ENCODE measurements at regions of chr12 and their contacts with region 1.

Region 1: DNA sequence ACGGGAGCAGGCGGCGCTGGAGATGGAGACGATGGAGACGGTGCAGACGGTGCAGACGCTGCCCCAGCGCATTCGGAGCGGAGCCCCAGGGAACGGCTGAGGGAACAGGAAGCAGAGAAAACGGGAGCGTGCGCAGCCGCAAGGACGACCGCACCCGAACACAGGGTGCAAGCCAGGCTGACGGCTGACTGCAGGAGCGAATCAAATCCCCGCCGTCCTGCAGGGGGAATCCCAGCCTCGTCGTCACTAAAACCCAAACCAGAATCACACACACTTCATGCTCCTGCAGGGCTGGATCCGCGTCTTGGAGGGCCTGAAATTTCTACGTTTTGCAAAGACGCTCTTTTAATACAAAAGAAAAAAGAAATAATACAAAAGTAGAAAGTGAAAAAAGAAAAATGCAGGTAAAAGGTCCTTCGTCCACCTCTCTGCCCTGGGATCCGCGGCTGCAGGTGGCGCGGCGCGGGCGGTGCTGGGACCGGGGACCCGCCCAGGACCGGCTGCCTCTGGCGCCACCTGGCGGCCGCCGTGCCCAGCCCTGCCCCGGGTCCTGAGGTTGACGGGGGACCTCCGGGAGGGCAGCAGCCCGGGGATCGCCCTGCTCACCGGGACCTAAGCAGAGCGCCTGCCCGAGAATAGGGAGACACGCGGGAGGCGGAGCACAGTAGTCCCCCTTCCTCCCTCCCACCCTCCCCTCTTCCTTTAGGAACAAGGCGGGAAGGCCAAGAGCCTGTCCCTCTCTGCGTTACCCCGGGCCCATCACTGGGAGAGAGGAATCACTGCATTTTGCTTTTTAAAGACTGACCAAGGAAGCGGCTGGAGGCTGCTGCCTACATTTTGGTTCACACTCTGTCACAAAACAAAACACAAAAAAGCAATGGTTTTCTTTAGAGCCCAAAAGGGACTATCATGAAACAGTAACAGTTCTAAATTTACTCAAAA is 20.1 kb downstream of the STX2 start:
- DNase-seq: peak; percentile 70 to 82 (median 73)
- H3K4me3 ChIP-seq: peak overlapping the region; percentile 60 to 69
- H3K4me3 Mint-ChIP-seq: peak overlapping the region; percentile 83 to 95 (median 92)
- H3K27ac ChIP-seq: peak overlapping the region; percentile 49
- H3K27ac Mint-ChIP-seq: peak overlapping the region in 6 of 7 donors; percentile 42 to 96 (median 85)
- H3K4me1 ChIP-seq: peaks cover 5% of the 10 kb centered on the region
- H3K4me1 Mint-ChIP-seq: peaks cover 7 to 15% (median 7%) of the 10 kb centered on the region in 4 donors
- H3K27me3 ChIP-seq: no peaks in the 10 kb centered on the region
- H3K27me3 Mint-ChIP-seq: no peaks in the 10 kb centered on the region

Region 2: DNA sequence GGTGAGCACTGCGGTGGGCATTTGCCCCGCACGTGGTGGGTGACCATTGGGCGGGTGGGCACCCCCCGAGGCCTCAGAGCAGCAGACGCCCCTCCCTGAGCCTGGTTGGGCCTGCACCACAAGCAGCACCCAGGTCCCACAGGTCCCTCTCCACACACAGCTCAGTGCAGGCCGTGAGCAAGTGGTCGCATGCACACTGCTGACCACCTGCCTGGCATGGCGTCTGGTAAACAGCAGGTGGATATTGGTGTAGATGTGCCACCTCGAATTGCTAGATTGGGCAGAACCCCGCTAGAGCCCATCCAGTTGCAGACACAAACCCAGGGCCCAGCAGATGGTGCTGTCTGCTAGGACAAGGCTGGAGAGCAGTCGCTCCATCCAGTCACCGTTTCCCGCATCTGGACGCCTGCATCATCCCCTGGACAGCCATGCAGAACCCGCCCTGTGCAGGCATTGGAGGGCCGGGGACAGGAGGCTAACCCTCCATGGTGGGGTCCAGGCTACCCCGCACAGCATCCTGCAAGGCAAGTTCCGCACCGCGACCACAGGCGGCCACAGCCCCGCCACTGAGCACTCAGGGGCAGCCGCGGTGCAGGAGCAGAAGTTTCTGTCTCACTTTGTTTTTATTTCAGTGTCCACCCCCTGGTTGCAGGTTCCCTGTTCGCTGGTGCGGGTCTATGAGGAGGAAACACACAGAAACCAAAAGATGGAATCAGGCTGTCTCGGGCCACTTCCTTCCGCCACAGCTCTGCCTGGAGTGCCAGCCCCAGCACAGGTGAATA is 57.2 kb before region 1 on chr12:
- CTCF ChIA-PET with region 1: interaction called, 5 read pairs
- POLR2A ChIA-PET with region 1: interaction called, 3 read pairs
- intact Hi-C with region 1: loop called (anchors 1 kb)
- DNase-seq: peak in 4 of 5 donors; percentile 47 to 54 (median 49)
- H3K4me3 ChIP-seq: peak overlapping the region; percentile 10 to 47
- H3K4me3 Mint-ChIP-seq: peak overlapping the region; percentile 59 to 75 (median 64)
- H3K27ac ChIP-seq: no peak overlapping the region
- H3K27ac Mint-ChIP-seq: peak overlapping the region in 2 of 7 donors; percentile 66 to 76
- H3K4me1 ChIP-seq: peaks cover 11% of the 10 kb centered on the region
- H3K4me1 Mint-ChIP-seq: peaks cover 0 to 16% (median 4%) of the 10 kb centered on the region in 4 donors
- H3K27me3 ChIP-seq: no peaks in the 10 kb centered on the region
- H3K27me3 Mint-ChIP-seq: peaks cover 0 to 2% of the 10 kb centered on the region in 2 donors

Region 3: GRCh38 chr12:130796985-130797686 is 21.8 kb before region 1 on chr12:
- CTCF ChIA-PET with region 1: interaction called, 8 read pairs
- POLR2A ChIA-PET with region 1: no interaction called
- intact Hi-C with region 1: loop called (anchors 1 kb)
- DNase-seq: peak; percentile 47 to 77 (median 58)
- H3K4me3 ChIP-seq: peak overlapping the region in 1 of 2 donors; percentile 53
- H3K4me3 Mint-ChIP-seq: peak overlapping the region; percentile 77 to 93 (median 85)
- H3K27ac ChIP-seq: peak overlapping the region; percentile 52
- H3K27ac Mint-ChIP-seq: peak overlapping the region; percentile 93 to 97 (median 95)
- H3K4me1 ChIP-seq: peaks cover 11% of the 10 kb centered on the region
- H3K4me1 Mint-ChIP-seq: peaks cover 9 to 16% (median 14%) of the 10 kb centered on the region in 4 donors
- H3K27me3 ChIP-seq: no peaks in the 10 kb centered on the region
- H3K27me3 Mint-ChIP-seq: no peaks in the 10 kb centered on the region

Region 4: DNA sequence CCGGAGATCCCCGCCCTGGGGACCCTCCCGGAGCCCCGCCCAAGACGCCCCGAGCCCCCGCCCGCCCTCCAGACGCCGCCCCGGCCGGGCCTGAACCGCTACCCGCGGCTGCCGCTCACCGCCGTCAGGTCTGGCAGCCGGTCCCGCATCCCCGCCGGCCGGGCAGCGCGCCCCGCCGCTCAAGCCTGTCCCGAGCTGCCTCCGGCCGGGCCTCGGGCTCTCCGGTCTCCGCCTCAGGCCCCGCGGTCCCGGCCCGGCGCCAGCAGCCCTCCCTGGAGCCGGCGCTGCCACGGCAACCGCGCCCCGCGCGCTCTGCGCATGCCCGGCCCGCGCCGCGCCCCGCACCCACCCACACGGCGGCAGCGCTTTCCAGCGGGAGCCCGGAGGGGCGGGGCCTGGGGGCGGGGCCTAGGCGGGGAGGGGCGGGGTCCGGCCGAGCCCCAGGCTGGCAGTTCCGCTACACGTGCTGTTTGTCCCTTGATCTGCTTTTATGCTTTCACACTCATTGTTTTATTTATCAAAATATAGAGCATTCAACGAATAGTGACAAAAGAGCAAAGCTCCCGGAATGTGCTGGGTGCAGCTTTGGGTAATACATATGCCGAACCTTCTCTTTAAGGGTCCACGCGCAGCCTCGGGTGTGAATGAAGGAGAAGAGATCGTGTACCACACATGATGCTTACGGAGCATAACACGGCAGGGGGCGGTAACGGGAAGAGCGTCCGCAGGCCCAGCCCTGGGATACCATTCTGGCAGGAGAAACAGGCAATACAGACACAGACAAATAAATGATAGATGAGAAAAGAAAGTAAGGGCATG is 20.3 kb after region 1 on chr12 and contains the start of gene STX2:
- CTCF ChIA-PET with region 1: interaction called, 62 read pairs
- POLR2A ChIA-PET with region 1: no interaction called
- intact Hi-C with region 1: loop called (anchors 2 kb)
- DNase-seq: peak; percentile 82 to 94 (median 90)
- H3K4me3 ChIP-seq: peak within 1 kb of the TSS; percentile 34 to 57
- H3K4me3 Mint-ChIP-seq: peak within 1 kb of the TSS; percentile 82 to 90 (median 86)
- H3K27ac ChIP-seq: peak within 1 kb of the TSS; percentile 52
- H3K27ac Mint-ChIP-seq: peak within 1 kb of the TSS; percentile 77 to 96 (median 95)
- H3K4me1 ChIP-seq: peaks cover 17% of the 10 kb centered on the region
- H3K4me1 Mint-ChIP-seq: peaks cover 23 to 34% (median 30%) of the 10 kb centered on the region in 4 donors
- H3K27me3 ChIP-seq: no peaks in the 10 kb centered on the region
- H3K27me3 Mint-ChIP-seq: no peaks in the 10 kb centered on the region
- total RNA-seq, gene STX2: 30.2 to 35.3 TPM

Region 5: GRCh38 chr12:131132118-131132892 is 313.4 kb after region 1 on chr12:
- CTCF ChIA-PET with region 1: interaction called, 94 read pairs
- POLR2A ChIA-PET with region 1: no interaction called
- intact Hi-C with region 1: loop called (anchors 2 kb)
- DNase-seq: peak; percentile 54 to 68 (median 58)
- H3K4me3 ChIP-seq: no peak overlapping the region
- H3K4me3 Mint-ChIP-seq: no peak overlapping the region
- H3K27ac ChIP-seq: no peak overlapping the region
- H3K27ac Mint-ChIP-seq: peak overlapping the region in 1 of 7 donors; percentile 31
- H3K4me1 ChIP-seq: peaks cover 6% of the 10 kb centered on the region
- H3K4me1 Mint-ChIP-seq: peaks cover 0 to 2% (median under 1%) of the 10 kb centered on the region in 4 donors
- H3K27me3 ChIP-seq: no peaks in the 10 kb centered on the region
- H3K27me3 Mint-ChIP-seq: no peaks in the 10 kb centered on the region

Measured in CD4-positive, alpha-beta memory T cell (primary cell).